ENCODE measurements at regions of chrX and their contacts with region 1.

Region 1: DNA sequence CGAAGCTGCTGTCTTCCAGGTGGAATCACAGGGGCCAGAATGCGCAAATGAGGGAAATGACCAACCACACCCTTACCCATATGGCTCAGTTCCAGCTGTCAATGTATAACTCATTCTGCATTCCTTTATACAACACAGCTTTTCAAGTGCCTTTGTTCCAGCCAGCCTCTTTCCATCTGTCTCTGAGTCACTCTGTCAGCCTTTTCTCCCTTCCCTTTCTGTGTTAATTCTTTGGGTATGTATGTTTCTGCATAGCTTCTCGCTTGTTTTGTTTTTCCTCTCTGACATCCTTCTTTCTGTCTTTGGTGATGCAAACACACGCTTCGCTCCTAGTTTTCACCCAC is 54.5 kb downstream of the RS1 start:
- DNase-seq: no peak
- CTCF ChIP-seq: no peak

Region 2: DNA sequence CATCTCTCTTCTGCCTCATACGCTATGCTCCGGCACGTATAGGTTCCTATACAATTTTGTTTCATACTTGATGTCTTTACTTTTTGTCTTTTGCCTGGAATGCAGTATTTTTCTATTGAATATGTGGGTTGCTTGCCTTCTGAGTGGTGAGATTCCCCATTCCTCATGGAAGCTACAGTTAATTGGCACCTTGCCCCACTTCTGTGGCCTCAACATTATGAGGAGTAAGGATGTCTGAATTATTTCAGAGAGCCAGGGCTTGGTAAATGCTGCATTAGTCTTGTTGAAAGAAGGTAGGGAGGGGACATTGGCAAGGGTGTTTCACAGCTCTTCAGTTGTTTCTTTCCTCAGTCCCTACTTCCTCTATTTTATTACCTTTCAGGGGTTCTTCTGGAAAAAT is 169.0 kb before region 1 on chrX:
- CTCF ChIA-PET with region 1: no interaction called
- POLR2A ChIA-PET with region 1: no interaction called
- DNase-seq: no peak
- CTCF ChIP-seq: no peak

Region 3: DNA sequence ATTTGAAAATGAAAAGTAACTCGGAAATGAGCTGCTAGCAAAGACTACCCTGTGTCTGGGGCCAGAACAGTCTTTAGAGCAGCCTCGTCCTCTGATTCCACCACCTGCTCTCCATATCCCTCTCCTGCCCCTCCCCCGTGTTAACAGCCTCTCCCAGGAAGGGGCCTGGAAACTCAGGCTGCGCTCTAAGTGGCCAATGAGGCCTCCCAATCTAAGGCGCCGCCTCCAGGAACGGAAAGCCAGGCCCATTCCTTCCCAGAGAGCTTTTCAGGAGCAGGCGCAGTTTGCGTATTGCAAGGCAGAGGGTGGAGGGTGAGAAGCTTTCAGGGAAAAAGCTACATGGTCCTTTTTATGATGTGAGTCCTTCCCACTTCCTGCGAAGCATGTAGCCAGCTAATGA is 23.3 kb after region 1 on chrX:
- CTCF ChIA-PET with region 1: no interaction called
- POLR2A ChIA-PET with region 1: no interaction called
- DNase-seq: no peak
- CTCF ChIP-seq: no peak

Region 4: DNA sequence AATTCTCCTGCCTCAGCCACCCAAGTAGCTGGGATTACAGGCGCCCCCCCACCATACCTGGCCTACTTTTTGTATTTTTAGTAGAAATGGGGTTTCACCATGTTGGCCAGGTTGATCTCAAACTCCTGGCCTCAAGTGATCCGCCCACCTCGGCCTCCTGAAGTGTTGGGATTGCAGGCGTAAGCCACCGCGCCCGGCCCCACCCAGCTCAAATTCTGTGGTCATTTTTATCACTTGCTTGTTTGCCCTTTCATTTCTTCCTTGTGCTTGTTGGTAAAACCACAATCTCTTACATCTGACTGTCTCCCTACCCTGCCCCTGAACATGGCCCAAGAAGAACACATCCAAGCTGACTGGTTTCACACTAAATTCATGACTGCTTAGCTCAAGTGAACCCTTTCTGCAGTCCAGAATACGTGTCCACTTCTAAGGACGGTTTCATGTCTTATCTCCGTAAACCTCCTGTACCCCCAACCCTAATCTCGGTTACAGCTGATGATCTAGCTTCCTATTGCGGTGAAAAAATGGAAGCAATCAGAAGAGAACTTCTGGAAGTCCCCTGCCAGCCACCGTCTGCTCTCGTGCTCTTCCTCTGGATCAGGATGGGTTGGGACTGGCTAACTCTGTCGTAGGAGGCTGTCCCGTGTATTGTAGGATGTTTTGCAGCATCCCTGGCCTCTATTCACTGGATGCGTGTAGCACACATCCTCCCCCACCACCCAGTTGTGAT is 59.9 kb after region 1 on chrX:
- CTCF ChIA-PET with region 1: no interaction called
- POLR2A ChIA-PET with region 1: interaction called, 11 read pairs
- DNase-seq: no peak
- CTCF ChIP-seq: no peak

Region 5: DNA sequence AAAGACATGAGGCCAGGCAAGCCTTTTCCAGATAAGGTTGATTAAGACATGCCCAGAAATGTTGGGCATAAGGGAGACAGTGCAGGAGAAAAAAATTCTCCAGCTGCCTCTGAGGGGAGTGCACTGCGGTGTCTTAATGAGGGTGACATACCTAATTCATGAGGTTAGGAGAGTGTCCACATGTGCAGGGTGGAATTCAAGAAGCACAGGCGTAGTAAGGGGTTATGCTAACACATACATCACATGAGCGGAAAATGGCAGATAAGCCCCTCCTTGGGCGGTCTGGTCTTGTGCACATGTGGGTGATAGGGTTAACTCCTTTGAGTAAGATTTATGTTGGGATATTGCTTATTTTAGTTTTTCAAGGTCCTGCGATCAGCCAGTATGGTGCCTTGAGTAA is 244.1 kb after region 1 on chrX:
- CTCF ChIA-PET with region 1: no interaction called
- POLR2A ChIA-PET with region 1: no interaction called
- DNase-seq: no peak
- CTCF ChIP-seq: no peak

Measured in GM10248 (cell line).